ENCODE measurements at regions of chr20 and their contacts with region 1.

Region 1: DNA sequence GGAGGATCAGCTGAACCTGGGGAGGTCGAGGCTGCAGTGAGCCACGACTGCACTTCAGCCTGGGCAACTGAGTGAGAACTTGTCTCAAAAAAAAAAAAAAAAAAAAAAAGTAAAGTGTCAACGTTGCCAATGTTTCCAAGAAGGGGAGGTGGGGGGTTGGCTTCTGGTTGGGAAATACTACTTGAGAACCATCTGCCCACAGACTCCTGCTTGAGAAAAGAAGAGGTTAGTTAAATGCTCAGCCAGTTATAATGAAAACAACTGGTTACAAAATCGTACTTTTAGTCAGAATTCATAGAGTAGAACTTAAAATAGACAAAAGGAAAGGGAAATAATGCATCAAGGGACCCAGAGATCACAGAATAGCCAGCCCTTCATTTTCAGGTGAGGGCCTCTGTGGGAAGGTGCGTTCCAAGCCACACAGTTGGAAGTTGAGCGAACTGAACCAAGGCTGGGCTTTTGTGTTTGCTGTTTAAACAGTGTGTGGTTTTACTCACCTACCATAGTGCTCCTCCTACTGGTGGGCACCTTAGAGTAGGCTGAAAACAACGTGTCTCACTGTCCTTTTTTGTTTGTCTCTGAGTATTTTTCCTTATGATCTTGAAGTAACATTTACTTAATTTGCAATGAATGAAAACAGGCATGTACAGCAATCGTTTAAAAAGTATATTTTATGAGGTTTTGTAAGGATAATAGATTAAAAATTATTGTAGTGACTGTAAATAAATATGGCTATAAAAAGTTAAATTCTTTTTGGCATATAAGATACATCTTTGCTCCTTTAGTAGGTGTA is 200.7 kb downstream of the BCAS1 start:
- DNase-seq: peak; percentile 27
- ATAC-seq: peak; percentile 80
- H3K4me3 Mint-ChIP-seq: peak overlapping the region; percentile 60
- H3K27ac Mint-ChIP-seq: peak overlapping the region; percentile 85
- H3K4me1 Mint-ChIP-seq: peaks cover 71% of the 10 kb centered on the region
- H3K27me3 Mint-ChIP-seq: no peaks in the 10 kb centered on the region
- CTCF ChIP-seq: no peak

Region 2: GRCh38 chr20:53070706-53071392 is 798.8 kb before region 1 on chr20:
- CTCF ChIA-PET with region 1: no interaction called
- POLR2A ChIA-PET with region 1: no interaction called
- intact Hi-C with region 1: no loop called
- DNase-seq: no peak
- ATAC-seq: peak; percentile 25
- H3K4me3 Mint-ChIP-seq: no peak overlapping the region
- H3K27ac Mint-ChIP-seq: peak overlapping the region; percentile 33
- H3K4me1 Mint-ChIP-seq: peaks cover 13% of the 10 kb centered on the region
- H3K27me3 Mint-ChIP-seq: peaks cover 3% of the 10 kb centered on the region
- CTCF ChIP-seq: no peak

Region 3: DNA sequence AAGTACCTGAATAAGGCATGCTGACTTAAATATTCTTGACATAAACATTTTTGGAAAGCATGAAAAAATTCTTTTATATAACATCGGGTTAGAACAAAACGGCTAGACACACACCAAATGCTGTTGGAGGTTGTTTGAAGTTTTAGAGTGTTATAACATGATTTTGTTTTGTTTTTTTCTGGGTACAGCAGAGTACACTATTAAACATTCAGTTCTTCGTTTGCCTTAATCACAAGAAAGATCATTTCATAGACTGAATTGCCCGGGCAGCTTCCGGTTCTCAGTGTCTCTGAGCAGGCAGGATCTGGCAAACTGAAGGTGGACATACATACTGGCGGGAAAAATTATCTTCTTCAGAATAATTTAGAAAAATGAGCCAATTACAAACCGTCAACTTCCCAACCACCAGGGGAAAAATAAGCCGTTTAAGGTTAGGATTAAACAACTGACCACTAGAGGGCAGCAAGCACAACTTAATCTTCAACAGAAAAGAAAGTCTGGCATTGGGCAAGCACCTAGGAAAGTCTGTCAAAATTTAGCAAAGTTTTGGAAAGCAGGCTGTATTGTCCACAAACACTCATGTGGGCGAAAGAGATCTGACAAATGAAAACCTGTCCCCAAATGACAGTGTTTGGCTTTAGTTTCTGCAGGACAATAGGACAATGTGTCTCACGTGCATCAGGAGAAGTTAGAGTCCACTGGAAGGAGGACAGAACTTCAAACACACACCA is 291.0 kb before region 1 on chr20:
- CTCF ChIA-PET with region 1: interaction called, 14 read pairs
- POLR2A ChIA-PET with region 1: interaction called, 3 read pairs
- intact Hi-C with region 1: loop called (anchors 1 kb)
- DNase-seq: no peak
- ATAC-seq: peak; percentile 58
- H3K4me3 Mint-ChIP-seq: peak overlapping the region; percentile 32
- H3K27ac Mint-ChIP-seq: peak overlapping the region; percentile 88
- H3K4me1 Mint-ChIP-seq: peaks cover 56% of the 10 kb centered on the region
- H3K27me3 Mint-ChIP-seq: no peaks in the 10 kb centered on the region
- CTCF ChIP-seq: no peak

Region 4: GRCh38 chr20:53738039-53738944 is 131.4 kb before region 1 on chr20:
- CTCF ChIA-PET with region 1: interaction called, 3 read pairs
- POLR2A ChIA-PET with region 1: interaction called, 9 read pairs
- intact Hi-C with region 1: loop called (anchors 5 kb)
- DNase-seq: no peak
- ATAC-seq: no peak
- H3K4me3 Mint-ChIP-seq: peak overlapping the region; percentile 74
- H3K27ac Mint-ChIP-seq: peak overlapping the region; percentile 97
- H3K4me1 Mint-ChIP-seq: peaks cover 78% of the 10 kb centered on the region
- H3K27me3 Mint-ChIP-seq: no peaks in the 10 kb centered on the region
- CTCF ChIP-seq: no peak

Region 5: GRCh38 chr20:53763707-53764414 is 105.8 kb before region 1 on chr20:
- CTCF ChIA-PET with region 1: interaction called, 3 read pairs
- POLR2A ChIA-PET with region 1: interaction called, 13 read pairs
- intact Hi-C with region 1: no loop called
- DNase-seq: no peak
- ATAC-seq: no peak
- H3K4me3 Mint-ChIP-seq: no peak overlapping the region
- H3K27ac Mint-ChIP-seq: no peak overlapping the region
- H3K4me1 Mint-ChIP-seq: peaks cover 25% of the 10 kb centered on the region
- H3K27me3 Mint-ChIP-seq: no peaks in the 10 kb centered on the region
- CTCF ChIP-seq: no peak

Region 6: GRCh38 chr20:53847129-53847836 is 22.4 kb before region 1 on chr20:
- CTCF ChIA-PET with region 1: no interaction called
- POLR2A ChIA-PET with region 1: interaction called, 9 read pairs
- intact Hi-C with region 1: loop called (anchors 2 kb)
- DNase-seq: no peak
- ATAC-seq: peak; percentile 79
- H3K4me3 Mint-ChIP-seq: peak overlapping the region; percentile 79
- H3K27ac Mint-ChIP-seq: peak overlapping the region; percentile 88
- H3K4me1 Mint-ChIP-seq: peaks cover 59% of the 10 kb centered on the region
- H3K27me3 Mint-ChIP-seq: no peaks in the 10 kb centered on the region
- CTCF ChIP-seq: no peak

Region 7: GRCh38 chr20:54062812-54063280 is 193.2 kb after region 1 on chr20:
- CTCF ChIA-PET with region 1: interaction called, 7 read pairs
- POLR2A ChIA-PET with region 1: no interaction called
- intact Hi-C with region 1: loop called (anchors 1 kb)
- DNase-seq: no peak
- ATAC-seq: no peak
- H3K4me3 Mint-ChIP-seq: no peak overlapping the region
- H3K27ac Mint-ChIP-seq: no peak overlapping the region
- H3K4me1 Mint-ChIP-seq: peaks cover 38% of the 10 kb centered on the region
- H3K27me3 Mint-ChIP-seq: no peaks in the 10 kb centered on the region
- CTCF ChIP-seq: no peak